Colonic mucosa (tissue), 4 donors: ENCODE measurements at regions of chr4 and their contacts with region 1.

Region 1: GRCh38 chr4:183471946-183472708 is 27.7 kb downstream of the CDKN2AIP start:
- DNase-seq: peak; percentile 93
- H3K4me3 ChIP-seq: no peak overlapping the region
- H3K27ac ChIP-seq: no peak overlapping the region
- H3K4me1 ChIP-seq: no peaks in the 10 kb centered on the region
- H3K27me3 ChIP-seq: no peaks in the 10 kb centered on the region
- CTCF ChIP-seq: peak; percentile 93

Region 2: DNA sequence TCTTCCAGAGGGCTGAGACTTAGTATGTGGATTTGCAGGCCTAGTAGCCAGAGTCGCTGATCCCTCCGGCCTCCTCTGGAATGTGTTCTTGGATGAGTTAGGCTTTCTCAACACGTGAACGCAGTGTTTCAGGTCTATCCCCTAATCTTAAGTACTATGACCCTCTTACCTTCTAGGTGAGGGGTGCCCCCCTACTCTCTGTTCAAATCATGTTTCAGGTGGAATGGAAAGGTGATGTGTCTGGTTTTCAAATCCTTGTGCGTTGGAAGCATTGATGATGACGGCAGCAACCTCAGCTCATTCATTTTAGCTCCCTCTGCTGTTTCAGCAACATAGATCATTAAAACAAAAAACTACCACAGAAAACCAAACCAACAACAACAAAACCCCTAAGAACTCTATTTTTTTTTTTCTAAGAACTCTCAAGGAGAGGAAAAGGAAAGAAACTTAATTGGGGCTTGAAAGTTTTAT is 130.5 kb after region 1 on chr4:
- intact Hi-C with region 1: loop called (anchors 5 kb)
- DNase-seq: no peak
- H3K4me3 ChIP-seq: no peak overlapping the region
- H3K27ac ChIP-seq: no peak overlapping the region
- H3K4me1 ChIP-seq: no peaks in the 10 kb centered on the region
- H3K27me3 ChIP-seq: no peaks in the 10 kb centered on the region
- CTCF ChIP-seq: no peak

Region 3: GRCh38 chr4:183636923-183637322 is 164.8 kb after region 1 on chr4:
- intact Hi-C with region 1: loop called (anchors 10 kb)
- DNase-seq: peak; percentile 36
- H3K4me3 ChIP-seq: no peak overlapping the region
- H3K27ac ChIP-seq: no peak overlapping the region
- H3K4me1 ChIP-seq: no peaks in the 10 kb centered on the region
- H3K27me3 ChIP-seq: no peaks in the 10 kb centered on the region
- CTCF ChIP-seq: no peak